SK-N-SH (cell line): ENCODE measurements at regions of chr7 and their contacts with region 1.

Region 1: GRCh38 chr7:19713676-19714075 is 4.8 kb upstream of the POLR1F start:
- DNase-seq: peak; percentile 15
- H3K4me3 ChIP-seq: no peak overlapping the region
- H3K27ac ChIP-seq: no peak overlapping the region
- H3K4me1 ChIP-seq: peaks cover 0 to 4% of the 10 kb centered on the region in 2 experiments; a peak in 1 of 4 replicates
- H3K27me3 ChIP-seq: no peaks in the 10 kb centered on the region
- CTCF ChIP-seq: peak; percentile 86
- EP300 ChIP-seq: no peak
- RAD21 ChIP-seq: peak; percentile 70

Region 2: DNA sequence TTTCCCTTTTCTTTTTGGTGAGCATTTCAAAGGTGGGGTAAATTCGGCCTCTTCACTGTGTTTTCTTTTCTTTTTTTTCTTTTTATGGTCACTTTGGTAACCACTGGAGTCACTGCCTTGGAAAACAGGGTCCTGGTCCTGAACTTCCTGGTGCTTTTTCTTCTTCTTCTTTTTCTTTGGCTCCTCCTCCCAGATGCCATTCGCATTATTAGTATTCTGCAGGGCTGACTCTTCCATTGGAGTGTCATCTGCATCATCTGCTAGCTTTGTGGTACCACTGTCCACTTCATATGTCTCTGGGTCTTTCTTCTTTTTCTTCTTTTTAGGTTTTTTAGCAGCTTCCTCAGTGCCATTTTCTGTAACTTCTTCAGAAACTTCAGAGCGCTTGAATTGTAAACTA is 15.3 kb before region 1 on chr7:
- CTCF ChIA-PET with region 1: interaction called, 31 read pairs
- POLR2A ChIA-PET with region 1: no interaction called
- DNase-seq: no peak
- H3K4me3 ChIP-seq: no peak overlapping the region
- H3K27ac ChIP-seq: no peak overlapping the region
- H3K4me1 ChIP-seq: no peaks in the 10 kb centered on the region; a peak in 1 of 4 replicates
- H3K27me3 ChIP-seq: no peaks in the 10 kb centered on the region
- CTCF ChIP-seq: no peak
- EP300 ChIP-seq: no peak
- RAD21 ChIP-seq: no peak

Region 3: DNA sequence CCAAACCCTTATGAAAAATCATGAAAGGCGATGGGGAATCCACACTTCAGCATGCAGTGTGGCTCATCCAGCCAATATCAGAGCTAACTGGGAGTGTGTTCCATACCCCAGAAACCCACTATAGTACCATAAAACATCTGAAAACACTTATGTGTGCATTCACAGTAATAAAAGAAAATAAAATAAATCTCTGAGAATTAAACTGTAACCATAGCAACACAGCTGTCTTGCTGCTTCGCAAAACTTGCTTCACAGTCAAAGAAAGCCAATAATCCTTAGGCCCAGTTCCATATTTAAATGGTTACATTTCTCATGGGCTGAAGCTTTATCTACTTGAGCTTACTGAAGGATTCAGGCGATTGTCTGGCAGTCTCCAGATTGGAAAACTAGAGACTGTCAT is 15.0 kb after region 1 on chr7:
- CTCF ChIA-PET with region 1: interaction called, 35 read pairs
- POLR2A ChIA-PET with region 1: no interaction called
- DNase-seq: no peak
- H3K4me3 ChIP-seq: no peak overlapping the region
- H3K27ac ChIP-seq: no peak overlapping the region
- H3K4me1 ChIP-seq: no peaks in the 10 kb centered on the region
- H3K27me3 ChIP-seq: peaks cover 4% of the 10 kb centered on the region; the same call in 1 of the 2 replicates
- CTCF ChIP-seq: no peak
- EP300 ChIP-seq: no peak
- RAD21 ChIP-seq: no peak

Region 4: DNA sequence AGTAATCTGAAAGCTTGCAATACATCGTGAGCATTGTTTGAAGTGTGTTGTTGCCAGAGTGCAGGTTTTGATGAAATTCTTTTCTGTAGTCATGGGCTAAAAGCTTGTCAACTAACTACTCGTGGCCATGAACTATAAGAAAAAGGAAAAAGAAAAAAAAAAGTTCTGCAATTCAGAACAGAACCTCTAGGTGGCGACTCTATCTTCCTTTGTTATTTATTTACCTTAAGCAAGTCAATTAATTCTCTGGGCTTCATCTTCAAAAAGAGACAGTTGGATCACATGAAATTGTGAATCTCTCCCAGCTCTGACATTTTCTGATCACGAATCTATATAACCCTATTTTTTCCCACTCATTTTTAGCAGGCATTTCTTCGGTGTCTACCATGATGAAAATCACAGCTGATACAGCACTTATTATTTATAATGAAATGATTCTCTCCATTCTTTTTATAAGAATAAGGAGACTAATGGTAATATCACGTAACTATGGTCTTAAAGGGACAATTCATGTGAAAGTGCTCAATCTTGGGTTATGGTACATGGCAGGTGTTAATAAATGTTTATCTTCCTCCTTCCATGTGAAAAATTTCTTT is 40.9 kb after region 1 on chr7:
- CTCF ChIA-PET with region 1: interaction called, 10 read pairs
- POLR2A ChIA-PET with region 1: no interaction called
- DNase-seq: peak; percentile 12
- H3K4me3 ChIP-seq: no peak overlapping the region; a peak in 1 of 4 replicates
- H3K27ac ChIP-seq: no peak overlapping the region
- H3K4me1 ChIP-seq: no peaks in the 10 kb centered on the region
- H3K27me3 ChIP-seq: peaks cover 5% of the 10 kb centered on the region; the same call in 1 of the 2 replicates
- CTCF ChIP-seq: peak; percentile 95
- EP300 ChIP-seq: no peak
- RAD21 ChIP-seq: peak; percentile 71

Region 5: DNA sequence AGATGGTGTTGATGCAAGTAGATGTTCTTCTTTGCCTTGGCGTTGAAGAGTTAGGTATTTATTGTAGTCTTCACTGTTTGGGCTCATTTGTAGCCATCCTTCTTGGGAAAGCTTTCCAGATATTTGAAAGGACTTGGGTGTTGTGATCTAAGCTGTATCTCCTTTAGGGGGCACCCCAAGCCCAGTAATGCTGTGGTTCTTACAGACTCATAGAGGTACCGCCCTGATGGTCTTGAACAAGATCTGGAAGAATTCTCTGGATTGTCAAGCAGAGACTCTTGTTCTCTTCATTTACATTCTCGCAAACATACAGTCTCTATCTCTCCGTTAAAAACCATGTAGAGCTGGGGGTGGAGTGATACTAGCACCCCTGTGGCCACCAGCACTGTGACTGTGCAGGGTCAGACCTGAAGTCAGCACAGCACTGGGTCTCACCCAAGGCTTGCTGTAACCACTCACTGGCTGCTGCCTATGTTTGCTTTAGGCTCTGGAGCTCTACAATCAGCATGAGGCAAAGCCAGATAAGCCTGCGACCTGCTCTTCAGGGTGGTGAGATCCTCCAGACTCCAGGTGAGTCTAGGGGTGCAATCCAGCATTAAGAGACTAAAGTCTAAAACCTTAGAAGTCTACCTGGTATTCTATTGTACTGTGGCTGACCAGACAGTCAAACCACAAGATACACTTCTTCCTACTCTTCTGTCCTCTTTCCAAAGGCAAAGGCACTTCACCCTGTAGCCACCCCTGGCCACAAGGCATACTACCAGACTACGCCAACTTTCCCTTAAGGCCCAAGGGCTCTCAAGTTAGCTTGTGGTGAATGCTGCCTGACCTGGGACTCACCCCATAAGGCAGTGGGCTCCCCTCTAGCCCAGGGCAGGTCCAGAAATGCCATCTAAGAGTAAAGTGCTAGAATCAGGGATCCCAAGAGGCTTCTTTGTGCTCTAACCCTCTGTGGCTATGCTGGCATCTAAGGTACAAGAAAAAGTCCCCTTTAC is 269.5 kb after region 1 on chr7:
- CTCF ChIA-PET with region 1: interaction called, 11 read pairs
- POLR2A ChIA-PET with region 1: no interaction called
- DNase-seq: no peak
- H3K4me3 ChIP-seq: no peak overlapping the region
- H3K27ac ChIP-seq: no peak overlapping the region
- H3K4me1 ChIP-seq: no peaks in the 10 kb centered on the region
- H3K27me3 ChIP-seq: no peaks in the 10 kb centered on the region
- CTCF ChIP-seq: peak; percentile 71
- EP300 ChIP-seq: no peak
- RAD21 ChIP-seq: peak; percentile 78

Region 6: DNA sequence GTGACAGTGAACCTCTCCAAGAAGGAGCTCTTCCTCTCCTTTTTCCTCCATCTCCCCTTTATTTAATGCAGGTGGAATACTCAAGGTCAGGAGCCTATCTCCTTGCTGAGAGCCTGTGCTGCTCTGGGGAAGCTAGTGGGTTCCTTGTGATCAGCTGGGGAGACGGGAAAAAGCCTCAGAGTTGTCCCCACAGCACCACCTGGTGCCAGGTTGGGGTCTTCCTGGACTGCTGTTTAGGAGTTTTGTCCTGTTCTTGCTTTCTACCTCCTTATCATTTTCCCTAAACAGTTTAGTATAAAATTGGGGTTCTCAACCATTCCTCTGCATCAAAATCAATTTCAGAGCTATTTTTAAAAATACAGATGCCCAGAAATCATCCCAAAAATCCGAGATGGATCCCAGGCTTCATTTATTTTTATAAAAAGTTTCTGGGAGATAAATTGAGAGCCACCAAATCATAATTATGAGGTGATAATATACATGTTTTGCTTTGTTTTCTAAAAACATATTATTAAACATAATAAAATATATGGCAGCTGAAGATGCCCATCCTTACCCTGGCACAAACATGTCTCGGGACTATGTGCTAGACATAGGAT is 459.2 kb after region 1 on chr7:
- CTCF ChIA-PET with region 1: interaction called, 11 read pairs
- POLR2A ChIA-PET with region 1: no interaction called
- DNase-seq: peak; percentile 66
- H3K4me3 ChIP-seq: no peak overlapping the region
- H3K27ac ChIP-seq: no peak overlapping the region
- H3K4me1 ChIP-seq: no peaks in the 10 kb centered on the region
- H3K27me3 ChIP-seq: no peaks in the 10 kb centered on the region
- CTCF ChIP-seq: peak; percentile 67
- EP300 ChIP-seq: no peak
- RAD21 ChIP-seq: peak; percentile 78

Region 7: DNA sequence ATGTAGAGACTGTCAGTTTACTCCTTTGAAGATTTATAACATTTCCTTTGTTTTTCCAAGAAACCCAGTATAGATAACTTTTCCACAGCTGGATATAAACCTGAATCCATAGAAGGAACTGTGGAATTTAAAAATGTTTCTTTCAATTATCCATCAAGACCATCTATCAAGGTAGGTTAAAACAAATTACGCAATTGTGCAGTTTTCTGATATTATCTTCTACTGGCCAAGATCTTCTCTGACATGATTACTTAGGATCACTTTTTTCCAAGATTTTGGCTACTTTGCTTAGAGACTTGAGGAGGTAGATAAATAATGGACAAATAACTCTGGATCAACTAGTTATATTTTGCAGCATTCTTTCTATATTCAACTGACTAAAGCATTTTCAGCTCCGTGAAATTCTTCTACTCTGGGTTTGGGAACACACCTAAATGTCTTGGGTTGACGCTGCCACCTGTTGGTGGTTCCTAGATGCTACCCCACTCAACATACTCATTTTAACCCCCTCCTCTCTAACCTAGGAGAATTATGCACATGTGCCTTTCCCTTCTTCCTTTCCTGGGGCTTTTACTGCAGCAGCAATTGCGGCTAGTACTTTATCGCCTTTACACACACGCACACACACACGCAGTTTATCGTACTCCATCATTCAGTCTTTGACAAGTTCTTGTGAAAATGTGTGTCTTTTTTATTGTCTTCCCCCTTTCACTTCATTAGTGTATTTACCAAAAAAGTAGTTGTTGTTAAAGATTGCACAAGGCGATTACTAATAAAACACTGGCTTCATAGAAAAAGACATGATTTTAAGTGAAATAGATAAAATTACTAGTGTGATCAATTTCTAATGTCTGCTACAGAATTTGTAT is 934.5 kb after region 1 on chr7:
- CTCF ChIA-PET with region 1: interaction called, 19 read pairs
- POLR2A ChIA-PET with region 1: no interaction called
- DNase-seq: peak; percentile 51
- H3K4me3 ChIP-seq: no peak overlapping the region
- H3K27ac ChIP-seq: no peak overlapping the region
- H3K4me1 ChIP-seq: no peaks in the 10 kb centered on the region
- H3K27me3 ChIP-seq: no peaks in the 10 kb centered on the region; the same call in 1 of the 2 replicates
- CTCF ChIP-seq: peak; percentile 44; the same call in 1 of the 2 replicates
- EP300 ChIP-seq: no peak
- RAD21 ChIP-seq: peak; percentile 66